Activated CD4-positive, alpha-beta T cell treated with anti-CD3 and anti-CD28 coated beads, Interleukin-2, amount 10 ng/mL, durations not matched to agents 24 days and 14 days (primary cell): ENCODE measurements at regions of chr13 and their contacts with region 1.

Region 1: DNA sequence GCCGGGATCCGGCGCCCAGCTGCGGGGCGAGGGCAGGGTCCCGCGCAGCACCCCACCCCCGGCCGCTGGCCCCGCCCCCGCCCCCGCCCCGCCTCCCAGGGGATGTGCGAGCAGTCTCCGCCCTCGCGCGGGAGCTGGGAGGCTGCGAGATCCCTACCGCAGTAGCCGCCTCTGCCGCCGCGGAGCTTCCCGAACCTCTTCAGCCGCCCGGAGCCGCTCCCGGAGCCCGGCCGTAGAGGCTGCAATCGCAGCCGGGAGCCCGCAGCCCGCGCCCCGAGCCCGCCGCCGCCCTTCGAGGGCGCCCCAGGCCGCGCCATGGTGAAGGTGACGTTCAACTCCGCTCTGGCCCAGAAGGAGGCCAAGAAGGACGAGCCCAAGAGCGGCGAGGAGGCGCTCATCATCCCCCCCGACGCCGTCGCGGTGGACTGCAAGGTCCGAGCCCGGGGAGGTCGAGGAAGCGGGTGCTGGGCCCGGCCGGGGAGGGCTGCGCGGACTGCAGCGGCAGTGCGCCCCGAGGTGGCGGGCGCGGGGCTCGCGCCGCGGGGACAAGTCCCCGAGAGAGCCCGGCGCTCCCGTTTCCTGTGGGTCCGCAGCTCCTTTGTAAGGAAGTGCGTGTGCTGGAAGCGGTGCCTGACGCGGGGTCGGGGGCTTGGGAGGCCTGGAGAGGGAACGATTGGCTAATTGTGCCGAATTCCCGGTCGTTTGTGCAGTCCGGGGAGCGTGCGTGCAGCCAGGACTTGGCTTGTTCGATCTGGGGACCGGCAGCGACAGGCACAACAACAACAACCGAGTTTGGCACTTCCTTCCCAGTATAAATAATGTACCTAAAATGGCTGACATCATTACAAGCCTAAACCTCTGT is at the start of gene ITM2B:
- DNase-seq: peak; percentile 89
- H3K4me3 Mint-ChIP-seq: peak within 1 kb of the TSS; percentile 91
- H3K27ac Mint-ChIP-seq: peak within 1 kb of the TSS; percentile 88
- H3K4me1 Mint-ChIP-seq: peaks cover 35% of the 10 kb centered on the region
- H3K27me3 Mint-ChIP-seq: peaks cover 24% of the 10 kb centered on the region
- total RNA-seq, gene ITM2B: 51.7 and 53.1 TPM in 2 replicates

Region 2: GRCh38 chr13:48050550-48050949 is 182.7 kb before region 1 on chr13:
- intact Hi-C with region 1: no loop called
- DNase-seq: no peak
- H3K4me3 Mint-ChIP-seq: no peak overlapping the region
- H3K27ac Mint-ChIP-seq: no peak overlapping the region
- H3K4me1 Mint-ChIP-seq: no peaks in the 10 kb centered on the region
- H3K27me3 Mint-ChIP-seq: no peaks in the 10 kb centered on the region

Region 3: GRCh38 chr13:48094781-48095502 is 138.3 kb before region 1 on chr13 and contains the start of gene MED4:
- intact Hi-C with region 1: loop called (anchors 1 kb)
- DNase-seq: peak; percentile 100
- H3K4me3 Mint-ChIP-seq: peak within 1 kb of the TSS; percentile 92
- H3K27ac Mint-ChIP-seq: peak within 1 kb of the TSS; percentile 89
- H3K4me1 Mint-ChIP-seq: peaks cover 24% of the 10 kb centered on the region
- H3K27me3 Mint-ChIP-seq: peaks cover 7% of the 10 kb centered on the region
- total RNA-seq, gene MED4: 61.8 and 63.5 TPM in 2 replicates

Region 4: GRCh38 chr13:48155848-48156247 is 77.4 kb before region 1 on chr13:
- intact Hi-C with region 1: loop called (anchors 1 kb)
- DNase-seq: peak; percentile 80
- H3K4me3 Mint-ChIP-seq: peak overlapping the region; percentile 44
- H3K27ac Mint-ChIP-seq: peak overlapping the region; percentile 87
- H3K4me1 Mint-ChIP-seq: peaks cover 59% of the 10 kb centered on the region
- H3K27me3 Mint-ChIP-seq: no peaks in the 10 kb centered on the region

Region 5: GRCh38 chr13:48220981-48221685 is 12.1 kb before region 1 on chr13:
- intact Hi-C with region 1: loop called (anchors 1 kb)
- DNase-seq: peak; percentile 73
- H3K4me3 Mint-ChIP-seq: peak overlapping the region; percentile 69
- H3K27ac Mint-ChIP-seq: peak overlapping the region; percentile 78
- H3K4me1 Mint-ChIP-seq: peaks cover 35% of the 10 kb centered on the region
- H3K27me3 Mint-ChIP-seq: peaks cover 15% of the 10 kb centered on the region

Region 6: DNA sequence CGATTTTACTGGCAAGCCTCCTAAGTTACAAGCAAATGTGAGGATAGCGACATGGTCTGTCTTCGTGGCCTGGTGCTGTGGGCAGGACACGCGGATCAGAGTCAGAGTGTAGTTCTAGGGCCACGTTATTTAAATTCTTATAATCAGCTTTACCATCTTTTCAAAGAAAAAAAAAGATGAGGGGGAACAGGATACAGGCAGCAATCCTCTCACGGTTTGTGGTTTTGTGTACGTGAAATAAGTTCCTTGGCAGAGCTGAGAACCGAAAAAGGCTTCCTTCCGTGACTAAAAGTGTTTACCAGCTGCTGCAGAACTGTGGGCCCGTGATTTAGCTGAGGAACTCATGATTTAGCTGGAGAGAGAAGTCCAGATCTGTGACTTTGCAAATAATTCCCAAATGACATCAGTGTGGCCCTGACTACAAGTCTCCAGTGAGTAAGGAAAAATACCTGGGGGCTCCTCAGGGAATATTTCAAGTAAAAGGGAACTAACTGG is 272.4 kb after region 1 on chr13:
- intact Hi-C with region 1: loop called (anchors 10 kb)
- DNase-seq: peak; percentile 89
- H3K4me3 Mint-ChIP-seq: peak overlapping the region; percentile 64
- H3K27ac Mint-ChIP-seq: peak overlapping the region; percentile 84
- H3K4me1 Mint-ChIP-seq: peaks cover 66% of the 10 kb centered on the region
- H3K27me3 Mint-ChIP-seq: peaks cover 7% of the 10 kb centered on the region

Region 7: GRCh38 chr13:49374585-49375290 is 1141.5 kb after region 1 on chr13:
- intact Hi-C with region 1: no loop called
- DNase-seq: no peak
- H3K4me3 Mint-ChIP-seq: no peak overlapping the region
- H3K27ac Mint-ChIP-seq: no peak overlapping the region
- H3K4me1 Mint-ChIP-seq: peaks cover 2% of the 10 kb centered on the region
- H3K27me3 Mint-ChIP-seq: peaks cover 1% of the 10 kb centered on the region